Gastrocnemius medialis (tissue), 4 donors: ENCODE measurements at regions of chr11 and their contacts with region 1.

Region 1: GRCh38 chr11:66344550-66345315 is at the start of gene BRMS1:
- DNase-seq: peak; percentile 98
- ATAC-seq: peak; percentile 83 to 86
- H3K4me3 ChIP-seq: peak within 1 kb of the TSS; percentile 83 to 97 (median 93)
- H3K27ac ChIP-seq: peak within 1 kb of the TSS; percentile 80 to 91 (median 87)
- H3K4me1 ChIP-seq: peaks cover 35 to 36% of the 10 kb centered on the region in 2 donors
- H3K27me3 ChIP-seq: no peaks in the 10 kb centered on the region
- CTCF ChIP-seq: peak in 4 of 5 experiments; percentile 35 to 57 (median 48)
- POLR2A ChIP-seq: peak; percentile 92 to 96
- total RNA-seq, gene BRMS1: 40.1 to 73.5 (median 64.8) TPM

Region 2: DNA sequence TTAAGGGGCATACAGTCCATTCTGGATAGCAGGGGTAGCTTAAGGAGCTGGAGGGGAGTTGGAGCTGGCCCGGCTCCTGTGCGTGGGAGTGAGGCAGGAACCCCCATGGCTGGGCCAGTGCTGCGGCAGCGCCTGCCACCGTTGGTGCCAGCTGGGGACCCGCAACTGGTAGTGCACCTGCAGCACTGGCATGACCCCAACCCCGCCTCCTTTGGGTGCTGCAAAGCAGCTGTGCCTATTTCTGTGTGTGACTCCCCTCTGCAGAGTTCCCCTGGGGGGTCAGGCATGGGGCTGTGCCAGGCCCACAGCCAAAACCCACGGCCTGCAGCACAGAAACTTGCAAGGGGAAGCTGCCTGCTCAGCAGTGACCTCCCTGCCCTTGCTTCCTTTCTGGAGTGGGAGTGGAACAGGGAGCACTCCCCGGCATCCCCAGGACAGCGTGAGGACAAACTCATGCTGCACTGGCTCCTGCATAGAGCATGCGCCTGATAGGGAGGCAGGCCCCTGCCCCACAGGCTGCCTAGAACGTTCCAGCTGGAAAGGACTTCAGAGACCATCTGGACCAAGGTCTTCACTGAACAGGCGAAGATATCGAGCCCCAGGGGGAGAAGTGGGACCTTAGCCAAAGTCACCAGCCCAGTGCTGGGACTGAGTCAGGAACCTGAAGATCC is 102.5 kb before region 1 on chr11:
- in situ Hi-C with region 1: no loop called
- intact Hi-C with region 1: no loop called
- DNase-seq: no peak
- ATAC-seq: no peak
- H3K4me3 ChIP-seq: no peak overlapping the region
- H3K27ac ChIP-seq: no peak overlapping the region
- H3K4me1 ChIP-seq: peaks cover 10 to 16% of the 10 kb centered on the region in 2 donors
- H3K27me3 ChIP-seq: no peaks in the 10 kb centered on the region
- CTCF ChIP-seq: no peak
- POLR2A ChIP-seq: no peak

Region 3: DNA sequence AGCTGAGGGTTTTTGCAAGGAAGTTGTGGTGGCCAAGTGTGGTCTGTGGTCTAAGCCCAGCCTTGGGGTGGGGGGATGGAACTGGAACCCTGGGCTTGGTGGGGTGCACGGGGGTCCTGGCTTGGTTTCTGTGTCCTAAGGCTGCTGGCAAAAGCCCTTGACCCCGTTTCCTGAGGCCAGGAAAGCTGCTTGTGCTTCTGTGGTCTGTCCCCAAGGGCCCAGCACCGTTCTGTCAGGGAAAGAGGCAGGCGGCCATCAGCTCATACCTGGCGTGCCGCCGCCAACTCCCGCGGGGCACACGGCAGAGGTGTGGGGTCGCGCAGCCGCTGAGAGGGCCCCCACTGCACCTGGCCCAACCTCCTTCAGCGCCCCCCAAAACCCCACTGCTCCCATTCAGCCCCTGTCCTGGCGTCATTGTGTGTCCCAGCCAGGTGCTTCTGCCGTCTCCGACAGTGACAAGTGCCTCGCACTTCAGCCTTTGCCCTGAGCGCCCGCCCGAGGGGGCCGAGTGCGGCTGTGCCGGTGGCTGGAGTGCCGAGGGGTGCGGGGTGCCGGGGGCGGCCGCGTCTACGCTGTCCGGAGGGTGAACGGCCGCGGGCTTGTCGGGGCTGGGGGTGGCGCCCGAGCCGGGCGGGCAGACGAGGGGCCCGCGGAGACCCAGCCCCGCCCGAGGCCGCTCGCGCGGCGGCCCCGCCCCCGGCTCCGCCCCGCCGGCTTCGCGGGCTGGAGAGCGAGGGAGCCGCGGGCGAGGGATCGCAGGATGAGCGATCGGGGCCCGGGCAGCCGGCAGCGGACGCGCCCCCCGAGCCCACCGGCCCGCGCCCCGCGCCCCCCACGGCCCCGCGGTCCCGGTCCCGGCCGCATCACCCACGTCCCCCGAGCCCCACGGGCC is 67.0 kb before region 1 on chr11 and contains the start of gene CNIH2:
- in situ Hi-C with region 1: no loop called
- intact Hi-C with region 1: no loop called
- DNase-seq: no peak
- ATAC-seq: peak in 1 of 2 donors; percentile 51
- H3K4me3 ChIP-seq: peak within 1 kb of the TSS; percentile 36 to 47 (median 42)
- H3K27ac ChIP-seq: peak within 1 kb of the TSS in 1 of 4 donors; percentile 18
- H3K4me1 ChIP-seq: peaks cover 2 to 6% of the 10 kb centered on the region in 2 donors
- H3K27me3 ChIP-seq: no peaks in the 10 kb centered on the region
- CTCF ChIP-seq: no peak
- POLR2A ChIP-seq: no peak
- total RNA-seq, gene CNIH2: not detected

Region 4: GRCh38 chr11:66371627-66372415 is 27.1 kb after region 1 on chr11 and contains the start of gene SLC29A2:
- in situ Hi-C with region 1: no loop called
- intact Hi-C with region 1: loop called (anchors 2 kb)
- DNase-seq: peak; percentile 73 to 87
- ATAC-seq: peak; percentile 34 to 35
- H3K4me3 ChIP-seq: peak within 1 kb of the TSS; percentile 73 to 96 (median 78)
- H3K27ac ChIP-seq: peak within 1 kb of the TSS; percentile 97 to 99 (median 98)
- H3K4me1 ChIP-seq: peaks cover 48 to 58% of the 10 kb centered on the region in 2 donors
- H3K27me3 ChIP-seq: no peaks in the 10 kb centered on the region
- CTCF ChIP-seq: no peak
- POLR2A ChIP-seq: peak; percentile 56 to 69
- total RNA-seq, gene SLC29A2: 39.2 to 106 (median 70.6) TPM